GM10248 (cell line): ENCODE measurements at regions of chr11 and their contacts with region 1.

Region 1: GRCh38 chr11:76598426-76598839 is 72.1 kb downstream of the LRRC32 start:
- DNase-seq: peak; percentile 77
- CTCF ChIP-seq: peak; percentile 73

Region 2: DNA sequence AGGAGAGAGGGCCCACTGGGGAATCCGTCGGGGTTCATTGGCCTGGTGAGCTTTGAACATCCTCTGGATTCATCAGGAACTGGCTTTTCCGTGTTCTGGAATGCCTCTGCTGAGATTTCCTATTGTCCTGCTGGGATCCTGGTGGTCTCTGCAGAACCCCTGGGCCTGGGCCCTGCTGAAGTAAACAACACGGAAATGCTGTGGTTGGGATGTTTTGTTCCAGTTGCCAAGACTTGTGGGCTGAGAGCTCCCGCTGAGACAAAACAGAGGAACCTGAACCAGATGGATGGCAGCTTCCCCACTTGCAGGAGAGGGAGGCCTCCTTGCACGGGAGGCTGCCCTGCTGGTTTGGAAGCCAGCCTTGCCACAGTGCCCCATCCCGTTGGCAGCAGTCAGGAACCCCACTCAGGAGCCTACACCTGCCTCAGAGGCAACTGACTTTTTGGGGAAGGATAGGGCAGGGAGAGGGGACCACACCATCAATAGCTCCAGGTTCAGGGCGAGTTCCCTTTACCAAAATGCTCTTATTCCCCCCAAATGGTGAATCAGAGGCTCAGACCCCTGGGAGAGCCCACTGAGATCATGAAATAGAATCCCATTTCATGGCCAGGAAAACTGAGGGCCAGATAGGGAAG is 11.4 kb after region 1 on chr11:
- CTCF ChIA-PET with region 1: interaction called, 10 read pairs
- POLR2A ChIA-PET with region 1: no interaction called
- DNase-seq: no peak
- CTCF ChIP-seq: no peak

Region 3: GRCh38 chr11:76680518-76681425 is 82.3 kb after region 1 on chr11:
- CTCF ChIA-PET with region 1: interaction called, 72 read pairs
- POLR2A ChIA-PET with region 1: no interaction called
- DNase-seq: peak; percentile 84
- CTCF ChIP-seq: peak; percentile 74